ENCODE measurements at regions of chr2 and their contacts with region 1.

Region 1: DNA sequence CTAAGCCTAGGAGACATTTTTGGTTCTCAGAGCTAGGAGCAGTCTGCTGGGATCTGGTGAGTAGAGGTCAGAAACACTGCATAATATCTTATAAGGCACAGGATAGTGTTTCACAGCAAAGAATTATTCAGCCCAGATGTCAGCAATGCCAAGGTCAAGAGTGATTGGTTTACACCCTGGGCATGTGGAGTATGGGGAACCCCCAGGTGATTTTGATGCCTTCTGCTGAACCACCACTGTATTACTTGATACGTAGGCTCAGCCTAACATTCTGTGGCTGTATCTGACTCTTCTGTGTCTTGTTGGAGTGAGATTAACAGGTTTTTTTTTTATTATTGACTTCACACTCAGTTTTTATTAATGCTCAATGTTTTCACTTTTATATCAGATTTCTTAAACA is 6.0 kb downstream of the DDX18 start:
- DNase-seq: no peak
- ATAC-seq: peak; percentile 81
- H3K4me3 ChIP-seq: no peak overlapping the region
- H3K4me3 Mint-ChIP-seq: no peak overlapping the region
- H3K27ac ChIP-seq: peak overlapping the region; percentile 16
- H3K27ac Mint-ChIP-seq: peak overlapping the region in 6 of 9 donors; percentile 9 to 91 (median 42)
- H3K4me1 ChIP-seq: peaks cover 11 to 12% of the 10 kb centered on the region in 2 donors
- H3K4me1 Mint-ChIP-seq: peaks cover 23 to 62% (median 50%) of the 10 kb centered on the region in 7 donors
- H3K27me3 ChIP-seq: no peaks in the 10 kb centered on the region
- H3K27me3 Mint-ChIP-seq: no peaks in the 10 kb centered on the region

Region 2: GRCh38 chr2:117917223-117917917 is 96.9 kb after region 1 on chr2:
- CTCF ChIA-PET with region 1: no interaction called
- POLR2A ChIA-PET with region 1: no interaction called
- intact Hi-C with region 1: no loop called
- DNase-seq: no peak
- ATAC-seq: peak; percentile 12
- H3K4me3 ChIP-seq: no peak overlapping the region
- H3K4me3 Mint-ChIP-seq: no peak overlapping the region
- H3K27ac ChIP-seq: no peak overlapping the region
- H3K27ac Mint-ChIP-seq: no peak overlapping the region
- H3K4me1 ChIP-seq: no peaks in the 10 kb centered on the region
- H3K4me1 Mint-ChIP-seq: no peaks in the 10 kb centered on the region
- H3K27me3 ChIP-seq: no peaks in the 10 kb centered on the region
- H3K27me3 Mint-ChIP-seq: no peaks in the 10 kb centered on the region

Region 3: DNA sequence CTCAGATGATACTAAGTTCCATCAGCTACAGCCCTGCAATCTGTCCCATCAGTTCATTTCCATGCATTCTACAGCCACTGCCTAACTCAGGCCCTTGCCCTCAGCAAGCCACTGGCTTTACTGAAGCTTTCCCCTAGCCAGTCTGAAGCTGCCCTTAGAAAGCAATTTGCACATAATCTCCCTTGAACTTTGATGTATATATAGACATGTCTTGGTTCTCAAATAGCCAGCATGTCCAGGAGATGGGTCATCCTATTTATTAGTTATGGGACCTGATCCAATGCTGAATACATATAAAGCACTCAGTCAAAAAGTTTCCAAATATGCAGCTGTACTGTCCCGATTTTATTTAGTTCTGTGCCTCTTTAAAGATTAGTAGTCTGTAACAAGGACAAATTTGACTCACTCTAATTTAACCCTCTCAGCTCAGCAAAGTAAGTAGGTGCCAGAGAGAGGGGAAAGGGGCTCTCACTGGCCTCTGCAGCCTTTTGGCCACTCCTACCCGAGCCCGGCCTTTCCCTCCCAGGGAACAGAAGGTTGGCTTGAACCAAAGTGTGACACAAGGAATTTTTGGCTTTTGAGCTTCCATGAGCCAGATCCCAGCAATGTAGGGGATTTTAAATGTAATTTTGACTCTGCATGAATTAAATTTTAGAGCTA is 122.7 kb after region 1 on chr2:
- CTCF ChIA-PET with region 1: no interaction called
- POLR2A ChIA-PET with region 1: no interaction called
- intact Hi-C with region 1: loop called in 1 of 2 experiments (anchors 10 kb)
- DNase-seq: no peak
- ATAC-seq: no peak
- H3K4me3 ChIP-seq: no peak overlapping the region
- H3K4me3 Mint-ChIP-seq: no peak overlapping the region
- H3K27ac ChIP-seq: no peak overlapping the region
- H3K27ac Mint-ChIP-seq: peak overlapping the region in 4 of 9 donors; percentile 3 to 68 (median 30)
- H3K4me1 ChIP-seq: no peaks in the 10 kb centered on the region
- H3K4me1 Mint-ChIP-seq: peaks cover 0 to 5% (median 0%) of the 10 kb centered on the region in 7 donors
- H3K27me3 ChIP-seq: no peaks in the 10 kb centered on the region
- H3K27me3 Mint-ChIP-seq: no peaks in the 10 kb centered on the region

Measured in naive thymus-derived CD4-positive, alpha-beta T cell (primary cell).